ENCODE measurements at regions of chr18 and their contacts with region 1.

Region 1: GRCh38 chr18:14086458-14087231 is 45.6 kb downstream of the ZNF519 start:
- DNase-seq: no peak
- H3K4me3 ChIP-seq: no peak overlapping the region
- H3K27ac ChIP-seq: no peak overlapping the region
- H3K4me1 ChIP-seq: no peaks in the 10 kb centered on the region
- H3K27me3 ChIP-seq: no peaks in the 10 kb centered on the region
- CTCF ChIP-seq: peak; percentile 51 to 78 (median 70)
- EP300 ChIP-seq: no peak
- POLR2A ChIP-seq: no peak

Region 2: DNA sequence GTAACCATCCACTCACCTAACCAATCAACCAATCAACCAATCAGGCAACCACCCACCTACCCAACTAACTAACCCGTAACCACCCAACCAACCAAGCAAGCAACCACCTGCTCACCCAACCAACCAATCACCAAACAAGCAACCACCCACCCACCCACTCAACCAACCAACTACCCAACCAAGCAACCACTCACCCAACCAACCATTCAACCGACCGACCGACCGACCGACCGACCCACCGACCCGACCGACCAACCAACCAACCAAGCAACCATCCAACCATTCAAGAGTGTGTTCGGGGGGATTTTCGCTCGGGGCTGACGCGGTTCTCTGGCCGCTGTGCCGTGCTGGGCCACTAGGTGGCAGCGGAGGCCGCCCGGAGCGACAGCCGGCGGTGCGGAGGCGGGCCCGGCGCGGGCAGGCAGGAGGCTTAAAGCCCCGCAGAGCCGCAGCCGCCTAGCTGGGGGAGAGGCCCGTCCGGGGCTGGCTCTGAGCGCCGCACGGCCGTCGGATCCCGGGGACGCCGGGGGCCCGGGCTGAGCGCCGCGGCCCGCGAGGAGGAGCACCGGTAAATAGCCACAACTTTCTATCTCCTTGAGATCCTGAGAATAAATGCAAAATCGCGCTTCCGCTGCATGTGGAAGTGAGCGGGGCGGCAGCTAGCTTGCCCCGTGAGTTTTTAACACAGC is 262.8 kb before region 1 on chr18 and contains the start of gene MC5R:
- in situ Hi-C with region 1: loop called in 2 of 4 experiments (anchors 10 to 25 kb)
- intact Hi-C with region 1: loop called (anchors 5 kb)
- DNase-seq: peak; percentile 61
- H3K4me3 ChIP-seq: peak within 1 kb of the TSS in 3 of 4 donors; percentile 21 to 54 (median 40)
- H3K27ac ChIP-seq: no peak within 1 kb of the TSS
- H3K4me1 ChIP-seq: peaks cover 0 to 4% (median 0%) of the 10 kb centered on the region in 4 donors
- H3K27me3 ChIP-seq: peaks cover 32% of the 10 kb centered on the region
- CTCF ChIP-seq: peak; percentile 74 to 94 (median 88)
- EP300 ChIP-seq: no peak
- POLR2A ChIP-seq: no peak
- total RNA-seq, gene MC5R: not detected

Region 3: GRCh38 chr18:13831864-13832508 is 254.7 kb before region 1 on chr18:
- in situ Hi-C with region 1: loop called in 3 of 4 experiments (anchors 10 to 25 kb)
- intact Hi-C with region 1: no loop called
- DNase-seq: no peak
- H3K4me3 ChIP-seq: no peak overlapping the region
- H3K27ac ChIP-seq: no peak overlapping the region
- H3K4me1 ChIP-seq: no peaks in the 10 kb centered on the region
- H3K27me3 ChIP-seq: peaks cover 37% of the 10 kb centered on the region
- CTCF ChIP-seq: no peak
- EP300 ChIP-seq: no peak
- POLR2A ChIP-seq: no peak

Region 4: GRCh38 chr18:13934676-13935075 is 152.0 kb before region 1 on chr18:
- in situ Hi-C with region 1: no loop called
- intact Hi-C with region 1: no loop called
- DNase-seq: no peak
- H3K4me3 ChIP-seq: no peak overlapping the region
- H3K27ac ChIP-seq: no peak overlapping the region
- H3K4me1 ChIP-seq: no peaks in the 10 kb centered on the region
- H3K27me3 ChIP-seq: no peaks in the 10 kb centered on the region
- CTCF ChIP-seq: no peak
- EP300 ChIP-seq: no peak
- POLR2A ChIP-seq: no peak